ENCODE measurements at regions of chr2 and their contacts with region 1.

Region 1: DNA sequence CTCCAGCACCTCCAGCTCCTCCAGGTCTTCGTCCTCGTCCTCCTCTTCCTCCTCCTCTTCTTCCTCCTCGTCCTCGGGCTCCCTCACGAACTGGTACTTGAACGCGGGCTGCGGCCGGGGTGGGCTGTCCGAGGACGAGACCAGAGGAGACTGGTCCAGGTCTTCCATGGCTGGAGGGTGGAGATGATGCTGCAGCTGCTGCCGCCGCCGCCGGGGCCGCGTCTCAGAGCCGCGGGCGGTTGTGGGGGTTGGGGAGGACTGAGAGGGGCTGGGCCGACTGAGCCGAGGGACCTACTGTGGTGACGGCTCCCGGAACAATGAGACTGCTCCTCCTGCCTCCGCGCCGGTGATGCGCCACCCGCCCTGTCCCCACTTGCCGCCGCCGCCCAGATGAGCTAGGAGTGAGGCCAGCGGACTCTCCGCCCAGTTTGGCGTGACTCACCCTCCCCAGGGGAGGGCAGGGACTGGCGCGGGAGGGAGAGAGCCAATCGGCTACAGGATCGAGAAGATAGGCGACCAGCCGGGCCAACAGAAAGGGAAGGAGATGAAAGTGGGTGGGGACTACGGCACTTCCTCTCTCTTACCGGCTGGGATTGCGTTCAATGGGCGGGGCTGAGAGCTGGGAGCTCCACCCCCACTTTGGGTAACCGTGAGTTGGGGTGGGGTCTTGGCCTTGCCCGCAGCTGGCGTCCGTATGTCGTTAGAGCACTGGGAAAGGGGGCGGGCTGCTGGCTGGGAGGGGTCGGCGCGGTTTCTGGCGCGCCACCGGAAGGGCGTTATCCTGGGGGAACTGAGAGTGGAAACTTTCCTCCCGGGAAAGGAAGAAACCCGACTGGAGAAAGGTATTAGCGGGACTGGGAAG is at the start of gene RTN4:
- H3K4me3 ChIP-seq: peak within 1 kb of the TSS; percentile 99
- H3K27ac ChIP-seq: peak within 1 kb of the TSS; percentile 94
- H3K4me1 ChIP-seq: peaks cover 8% of the 10 kb centered on the region
- CTCF ChIP-seq: peak; percentile 73

Region 2: GRCh38 chr2:54899576-54900200 is 150.7 kb before region 1 on chr2:
- CTCF ChIA-PET with region 1: interaction called, 11 read pairs
- POLR2A ChIA-PET with region 1: interaction called, 5 read pairs
- H3K4me3 ChIP-seq: no peak overlapping the region
- H3K27ac ChIP-seq: no peak overlapping the region
- H3K4me1 ChIP-seq: no peaks in the 10 kb centered on the region
- CTCF ChIP-seq: no peak

Region 3: GRCh38 chr2:55061523-55062344 is 11.4 kb after region 1 on chr2:
- CTCF ChIA-PET with region 1: interaction called, 3 read pairs
- POLR2A ChIA-PET with region 1: interaction called, 10 read pairs
- H3K4me3 ChIP-seq: no peak overlapping the region
- H3K27ac ChIP-seq: no peak overlapping the region
- H3K4me1 ChIP-seq: no peaks in the 10 kb centered on the region
- CTCF ChIP-seq: no peak

Region 4: GRCh38 chr2:55080204-55080738 is 29.9 kb after region 1 on chr2:
- CTCF ChIA-PET with region 1: no interaction called
- POLR2A ChIA-PET with region 1: no interaction called
- H3K4me3 ChIP-seq: no peak overlapping the region
- H3K27ac ChIP-seq: no peak overlapping the region
- H3K4me1 ChIP-seq: no peaks in the 10 kb centered on the region
- CTCF ChIP-seq: no peak

Region 5: DNA sequence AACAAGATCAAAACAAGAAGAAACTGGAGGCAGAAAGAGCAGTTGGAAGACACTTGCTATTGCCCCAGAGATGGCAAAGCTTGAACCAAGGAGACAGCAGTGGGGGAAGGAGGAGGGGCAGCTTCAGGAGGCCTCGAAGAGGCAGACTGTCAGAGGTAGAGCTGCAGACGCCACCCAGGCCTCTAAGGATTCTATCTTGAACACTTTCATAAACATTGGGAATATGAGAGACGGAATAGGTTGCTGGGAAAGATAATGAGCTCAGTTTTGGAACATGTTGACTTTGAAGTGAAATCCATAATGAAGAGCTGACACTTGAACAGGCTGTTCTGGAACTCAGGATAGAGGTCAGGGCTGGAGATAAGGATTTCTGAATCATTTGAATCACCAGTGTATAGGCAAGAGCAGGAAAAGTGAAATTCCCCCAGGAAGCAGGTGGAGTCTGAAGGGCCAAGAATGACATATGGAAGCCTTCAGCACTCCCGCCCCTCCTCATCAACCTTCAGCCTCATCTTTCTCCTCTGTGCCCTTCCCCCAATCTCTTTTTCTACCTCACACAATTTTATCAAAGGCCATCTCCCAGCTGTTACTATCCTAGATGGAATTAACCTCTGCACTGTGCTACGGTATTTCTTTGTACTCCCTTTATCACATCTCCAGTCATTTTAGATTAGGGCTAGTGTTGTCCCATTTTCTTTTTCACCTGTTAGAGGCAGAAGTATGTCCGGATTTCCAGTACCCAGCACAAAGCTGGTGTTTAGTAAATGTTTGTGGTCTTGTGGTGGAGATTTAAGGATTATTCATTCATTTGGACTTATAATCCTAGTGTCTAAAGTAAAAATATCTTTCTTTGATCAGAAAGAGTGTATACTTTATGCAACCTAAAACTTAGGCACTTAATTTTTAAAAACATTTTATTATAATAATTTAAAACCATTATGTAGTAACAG is 47.4 kb after region 1 on chr2:
- CTCF ChIA-PET with region 1: interaction called, 3 read pairs
- POLR2A ChIA-PET with region 1: interaction called, 10 read pairs
- H3K4me3 ChIP-seq: no peak overlapping the region
- H3K27ac ChIP-seq: peak overlapping the region; percentile 63
- H3K4me1 ChIP-seq: peaks cover 6% of the 10 kb centered on the region
- CTCF ChIP-seq: no peak

Region 6: DNA sequence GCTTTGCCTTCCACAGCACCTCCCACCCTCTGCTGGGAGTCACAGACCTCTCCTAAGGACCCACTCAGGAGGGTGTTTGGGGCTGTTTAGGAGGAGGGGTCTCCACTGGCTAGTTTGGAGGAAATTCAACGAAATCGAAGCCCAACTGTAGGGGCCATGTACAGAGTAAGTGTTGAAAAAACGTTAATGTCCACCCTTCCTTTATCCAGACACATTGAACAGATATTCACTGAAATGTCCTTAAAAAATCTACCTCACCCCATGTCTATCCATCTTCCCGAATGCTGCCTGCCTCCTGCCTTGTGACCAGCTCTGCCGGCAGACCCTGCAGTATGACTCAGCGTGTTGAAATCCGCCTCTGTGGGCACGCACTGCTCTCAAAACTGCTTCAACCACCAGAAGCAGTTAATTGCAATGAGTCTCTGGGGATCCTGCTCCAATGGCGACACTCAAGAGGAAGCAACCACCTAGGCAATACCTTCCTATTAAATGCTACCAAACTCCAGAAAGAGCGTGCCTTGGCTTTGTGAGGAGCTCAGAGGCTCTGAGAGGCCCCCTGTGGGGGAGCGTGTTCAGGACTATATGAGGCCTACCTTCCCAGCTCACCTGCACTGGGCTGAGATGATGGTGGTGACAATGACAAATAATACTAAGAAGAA is 61.3 kb after region 1 on chr2:
- CTCF ChIA-PET with region 1: interaction called, 5 read pairs
- POLR2A ChIA-PET with region 1: interaction called, 19 read pairs
- H3K4me3 ChIP-seq: no peak overlapping the region
- H3K27ac ChIP-seq: peak overlapping the region; percentile 70
- H3K4me1 ChIP-seq: peaks cover 13% of the 10 kb centered on the region
- CTCF ChIP-seq: no peak

Region 7: DNA sequence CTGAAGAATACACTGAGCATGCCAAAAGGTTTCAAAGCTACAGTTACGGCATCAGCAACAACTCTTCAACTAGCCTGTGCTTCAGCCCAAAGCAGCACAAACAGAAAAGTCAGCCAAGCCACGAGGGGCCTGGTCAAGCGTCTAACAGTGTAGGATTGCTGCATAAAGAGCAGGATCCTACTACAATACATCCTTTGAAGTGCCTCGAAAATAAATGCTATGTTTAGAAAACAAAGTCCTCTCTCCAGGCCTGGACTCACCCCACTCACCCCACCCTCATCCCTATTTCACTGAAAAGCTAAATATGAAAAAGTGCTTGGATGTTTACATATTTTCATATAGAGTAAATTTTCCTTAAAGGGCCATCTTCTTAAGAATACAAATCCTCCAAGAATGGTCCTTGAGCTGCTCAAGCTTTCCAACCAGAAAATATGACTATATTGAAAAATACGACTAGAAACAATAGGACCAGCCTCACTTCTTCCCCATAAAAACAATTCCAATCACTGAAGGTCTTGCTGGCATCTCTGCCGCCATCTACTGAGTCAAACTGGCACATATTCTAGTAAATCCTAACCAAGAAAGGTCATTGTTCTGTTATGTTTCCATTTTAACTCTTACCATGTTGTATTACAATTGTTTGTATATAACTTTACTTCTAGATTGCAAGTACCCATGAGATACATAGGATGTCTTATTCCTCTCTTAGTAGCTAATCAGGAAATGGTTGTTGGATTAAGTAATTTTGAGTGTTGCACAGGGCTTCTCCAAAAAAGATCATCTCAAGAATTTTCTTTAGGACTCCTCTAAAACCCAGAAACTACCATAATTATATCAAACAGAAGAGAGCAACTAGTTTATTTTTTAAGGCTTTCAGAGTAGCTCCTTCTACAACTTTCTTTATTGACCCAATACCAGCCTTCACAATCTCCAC is 118.1 kb after region 1 on chr2:
- CTCF ChIA-PET with region 1: interaction called, 69 read pairs
- POLR2A ChIA-PET with region 1: interaction called, 9 read pairs
- H3K4me3 ChIP-seq: no peak overlapping the region
- H3K27ac ChIP-seq: no peak overlapping the region
- H3K4me1 ChIP-seq: no peaks in the 10 kb centered on the region
- CTCF ChIP-seq: 0 out of 2 replicates have a peak, but pooled peaks have one; percentile 18

Region 8: DNA sequence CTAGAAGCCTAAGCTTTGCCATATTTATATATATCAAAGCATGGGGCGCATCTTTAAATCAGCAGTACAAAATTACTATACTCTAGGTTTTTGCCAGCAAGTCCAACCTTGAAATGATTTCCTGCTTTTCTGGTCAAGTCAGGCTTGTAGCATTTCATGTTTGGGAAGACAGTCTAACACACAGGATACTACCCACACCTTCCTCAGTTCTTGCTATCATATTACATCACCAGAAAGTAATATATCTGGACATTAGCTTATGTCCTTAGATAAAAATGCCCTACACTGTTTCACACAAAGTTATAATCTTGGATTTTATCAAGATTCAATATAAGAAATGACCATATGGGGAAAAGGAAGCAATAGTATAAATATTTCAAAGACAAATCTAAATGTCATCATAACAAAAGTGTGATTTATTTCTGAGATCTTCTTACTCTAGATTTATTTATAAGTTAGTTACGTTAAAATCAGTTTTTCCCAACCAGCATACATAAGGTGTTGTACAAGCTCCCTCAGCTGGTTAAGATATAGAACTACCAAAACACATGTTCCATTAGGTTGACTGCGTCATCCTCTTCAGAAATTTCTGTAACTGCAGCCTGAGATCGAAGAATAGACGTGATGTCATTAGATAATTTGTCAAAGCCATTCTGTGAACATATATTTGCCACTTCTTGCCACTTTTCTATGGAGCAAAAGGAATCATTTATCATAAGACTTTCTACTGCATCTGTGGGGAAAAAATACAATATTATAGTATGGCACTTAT is 125.1 kb after region 1 on chr2:
- CTCF ChIA-PET with region 1: interaction called, 69 read pairs
- POLR2A ChIA-PET with region 1: interaction called, 4 read pairs
- H3K4me3 ChIP-seq: no peak overlapping the region
- H3K27ac ChIP-seq: no peak overlapping the region
- H3K4me1 ChIP-seq: no peaks in the 10 kb centered on the region
- CTCF ChIP-seq: no peak

Measured in HEK293 (cell line).